ENCODE measurements at regions of chr2 and their contacts with region 1.

Region 1: DNA sequence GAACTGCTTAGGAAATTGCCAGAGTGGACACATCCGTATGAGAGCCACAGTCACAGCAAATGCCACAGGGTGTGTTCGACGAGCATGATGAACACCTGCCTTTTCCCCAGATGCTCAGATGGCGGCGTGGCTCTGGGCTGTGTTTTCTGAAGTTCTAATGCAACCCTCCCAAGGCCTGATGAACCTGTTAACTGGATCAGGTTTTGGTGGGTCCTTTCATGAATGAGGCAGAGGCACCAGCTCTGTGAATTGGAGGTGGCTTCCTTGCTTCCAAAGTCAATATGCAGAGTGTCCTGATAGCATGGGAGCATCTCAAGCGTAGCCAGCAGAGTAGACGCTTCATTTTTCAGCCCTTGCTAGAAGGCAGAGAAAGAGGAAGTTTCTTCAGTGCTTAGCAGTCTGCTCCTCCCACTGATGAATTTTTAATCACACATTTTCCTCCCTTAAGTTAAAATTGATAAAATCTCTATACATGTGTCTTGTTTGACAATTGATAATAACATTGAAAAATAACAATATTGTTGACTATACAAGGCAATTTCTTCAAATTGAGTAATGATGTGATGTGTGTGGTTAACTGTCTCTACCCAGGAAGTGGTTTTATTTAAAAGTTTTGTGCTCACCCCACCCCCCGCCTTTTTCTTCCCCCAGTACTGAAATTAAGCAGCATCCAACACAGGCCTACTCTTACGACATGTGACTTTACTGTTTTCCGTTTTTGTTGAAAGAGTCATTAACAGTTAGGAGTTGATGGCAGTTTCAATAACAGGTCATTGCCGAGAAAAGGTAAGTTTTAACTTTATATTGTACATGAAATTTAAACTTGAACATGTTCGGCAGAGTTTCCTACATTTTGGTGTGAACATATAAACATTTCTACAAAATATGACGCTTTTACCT is at the start of gene ARHGAP15:
- DNase-seq: peak; percentile 90
- H3K4me3 Mint-ChIP-seq: peak within 1 kb of the TSS; percentile 80
- H3K27ac Mint-ChIP-seq: peak within 1 kb of the TSS; percentile 99
- H3K4me1 Mint-ChIP-seq: peaks cover 37% of the 10 kb centered on the region
- H3K27me3 Mint-ChIP-seq: no peaks in the 10 kb centered on the region
- total RNA-seq, gene ARHGAP15: 56.0 and 56.2 TPM in 2 replicates

Region 2: GRCh38 chr2:142769761-142770160 is 359.2 kb before region 1 on chr2:
- intact Hi-C with region 1: no loop called
- DNase-seq: no peak
- H3K4me3 Mint-ChIP-seq: no peak overlapping the region
- H3K27ac Mint-ChIP-seq: no peak overlapping the region
- H3K4me1 Mint-ChIP-seq: no peaks in the 10 kb centered on the region
- H3K27me3 Mint-ChIP-seq: no peaks in the 10 kb centered on the region

Region 3: DNA sequence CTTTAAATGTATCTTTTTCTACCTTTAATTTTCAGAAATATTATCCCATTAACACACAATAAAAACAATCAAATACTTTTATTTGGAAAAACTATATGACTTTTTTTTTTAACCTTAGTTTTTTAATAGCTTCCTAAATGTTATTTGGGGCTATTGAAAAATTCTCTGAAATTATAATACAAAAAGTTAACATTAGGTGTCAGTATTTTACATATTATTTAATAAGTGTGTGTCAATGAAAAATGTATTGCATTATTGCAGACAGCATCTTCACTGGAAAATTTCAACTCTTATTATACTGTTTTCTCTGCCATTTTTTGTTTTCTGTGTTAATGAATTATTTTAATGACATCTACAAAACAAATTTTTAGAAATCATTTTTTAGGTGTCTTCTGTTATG is 50.8 kb before region 1 on chr2:
- intact Hi-C with region 1: no loop called
- DNase-seq: no peak
- H3K4me3 Mint-ChIP-seq: no peak overlapping the region
- H3K27ac Mint-ChIP-seq: no peak overlapping the region
- H3K4me1 Mint-ChIP-seq: no peaks in the 10 kb centered on the region
- H3K27me3 Mint-ChIP-seq: peaks cover 5% of the 10 kb centered on the region

Region 4: GRCh38 chr2:143140864-143141661 is 12.1 kb after region 1 on chr2:
- intact Hi-C with region 1: loop called (anchors 1 kb)
- DNase-seq: no peak
- H3K4me3 Mint-ChIP-seq: peak overlapping the region; percentile 76
- H3K27ac Mint-ChIP-seq: peak overlapping the region; percentile 79
- H3K4me1 Mint-ChIP-seq: peaks cover 76% of the 10 kb centered on the region
- H3K27me3 Mint-ChIP-seq: no peaks in the 10 kb centered on the region

Region 5: DNA sequence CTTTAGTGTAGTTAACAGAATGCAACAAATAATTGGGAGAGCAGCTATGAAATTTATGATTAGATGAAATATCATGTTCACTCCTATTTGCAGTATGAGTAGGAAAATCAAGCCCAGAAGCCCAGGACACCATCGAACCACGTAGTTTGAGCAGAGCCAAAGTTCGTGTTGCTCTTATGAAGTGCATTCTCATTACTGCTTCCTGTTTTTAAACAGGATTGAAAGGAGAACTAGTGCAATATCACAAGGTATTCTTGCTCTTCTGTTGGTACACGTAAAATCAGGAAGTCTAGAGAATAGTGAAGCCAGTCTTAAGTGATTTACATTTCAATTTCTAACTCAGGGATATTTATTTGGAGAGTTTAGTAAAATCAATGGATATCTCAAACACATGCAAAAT is 21.4 kb after region 1 on chr2:
- intact Hi-C with region 1: loop called (anchors 1 kb)
- DNase-seq: no peak
- H3K4me3 Mint-ChIP-seq: peak overlapping the region; percentile 63
- H3K27ac Mint-ChIP-seq: peak overlapping the region; percentile 87
- H3K4me1 Mint-ChIP-seq: peaks cover 68% of the 10 kb centered on the region
- H3K27me3 Mint-ChIP-seq: no peaks in the 10 kb centered on the region